ENCODE measurements at regions of chr6 and their contacts with region 1.

Region 1: GRCh38 chr6:593139-593906 is 63.6 kb downstream of the HUS1B start:
- DNase-seq: no peak
- H3K4me3 ChIP-seq: no peak overlapping the region
- H3K27ac ChIP-seq: 0 out of 2 replicates have a peak overlapping the region, but pooled peaks have one; percentile 25
- H3K4me1 ChIP-seq: peaks cover 0 to 6% (median 3%) of the 10 kb centered on the region in 4 experiments; a peak in 6 of 7 replicates
- H3K27me3 ChIP-seq: no peaks in the 10 kb centered on the region
- CTCF ChIP-seq: peak in 2 of 3 experiments; percentile 39 to 55; a peak in 3 of 4 replicates
- EP300 ChIP-seq: no peak
- POLR2A ChIP-seq: no peak
- RAD21 ChIP-seq: peak; percentile 76 to 78

Region 2: DNA sequence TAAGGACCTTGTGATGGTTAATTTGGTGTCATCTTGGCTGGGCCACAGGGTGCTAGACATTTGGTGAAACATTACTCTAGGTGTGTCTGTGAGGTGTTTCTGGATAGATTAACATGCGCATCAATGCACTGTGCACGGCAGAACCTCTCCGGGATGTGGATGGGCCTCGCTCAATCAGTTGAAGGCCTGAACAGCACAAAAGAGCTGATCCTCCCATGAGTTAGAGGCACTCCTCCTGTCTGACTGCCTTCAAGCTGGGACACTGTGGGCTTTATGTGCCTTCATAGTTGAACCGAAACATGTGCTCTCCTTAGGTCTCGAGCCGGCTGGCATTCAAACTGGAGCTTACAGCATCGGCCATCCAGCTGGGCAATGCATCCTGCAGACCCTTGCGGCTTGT is 25.2 kb before region 1 on chr6:
- CTCF ChIA-PET with region 1: interaction called, 13 read pairs
- POLR2A ChIA-PET with region 1: no interaction called
- DNase-seq: no peak
- H3K4me3 ChIP-seq: no peak overlapping the region
- H3K27ac ChIP-seq: no peak overlapping the region
- H3K4me1 ChIP-seq: no peaks in the 10 kb centered on the region
- H3K27me3 ChIP-seq: no peaks in the 10 kb centered on the region
- CTCF ChIP-seq: no peak
- EP300 ChIP-seq: no peak
- POLR2A ChIP-seq: no peak
- RAD21 ChIP-seq: no peak

Region 3: DNA sequence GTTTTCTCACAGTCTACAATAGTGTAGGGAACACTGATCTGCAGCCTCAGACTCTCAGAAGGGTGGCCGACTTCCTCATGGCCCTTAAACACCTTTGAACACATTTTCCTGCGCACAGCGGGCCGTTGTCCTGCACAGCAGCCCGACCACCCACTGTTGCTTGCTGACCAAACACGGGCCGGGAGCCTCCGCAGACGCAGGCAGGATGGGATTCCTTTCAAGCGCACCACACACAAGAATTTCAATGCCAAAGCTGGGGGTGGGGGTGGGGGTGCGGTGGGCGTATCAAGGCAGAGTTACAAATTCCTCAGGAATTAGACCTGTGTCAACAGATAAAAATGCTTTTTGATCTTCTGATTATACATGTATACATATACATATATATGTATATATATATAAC is 11.0 kb before region 1 on chr6:
- CTCF ChIA-PET with region 1: interaction called, 29 read pairs
- POLR2A ChIA-PET with region 1: interaction called, 3 read pairs
- DNase-seq: peak; percentile 63 to 66
- H3K4me3 ChIP-seq: peak overlapping the region in 2 of 4 experiments; percentile 22 to 47; a peak in 5 of 8 replicates
- H3K27ac ChIP-seq: 0 out of 2 replicates have a peak overlapping the region, but pooled peaks have one; percentile 47
- H3K4me1 ChIP-seq: peaks cover 4 to 16% (median 8%) of the 10 kb centered on the region in 4 experiments; a peak in 4 of 7 replicates
- H3K27me3 ChIP-seq: no peaks in the 10 kb centered on the region
- CTCF ChIP-seq: no peak
- EP300 ChIP-seq: no peak
- POLR2A ChIP-seq: no peak
- RAD21 ChIP-seq: no peak

Region 4: GRCh38 chr6:683742-684440 is 90.6 kb after region 1 on chr6:
- CTCF ChIA-PET with region 1: interaction called, 10 read pairs
- POLR2A ChIA-PET with region 1: no interaction called
- DNase-seq: peak; percentile 63 to 95
- H3K4me3 ChIP-seq: peak overlapping the region; percentile 4 to 50 (median 44); a peak in 5 of 8 replicates
- H3K27ac ChIP-seq: peak overlapping the region; percentile 43; the same call in 1 of the 2 replicates
- H3K4me1 ChIP-seq: peaks cover 10 to 40% (median 27%) of the 10 kb centered on the region in 4 experiments
- H3K27me3 ChIP-seq: no peaks in the 10 kb centered on the region
- CTCF ChIP-seq: no peak
- EP300 ChIP-seq: peak in 1 of 2 experiments; percentile 88; a peak in 1 of 3 replicates
- POLR2A ChIP-seq: no peak; a peak in 1 of 3 replicates
- RAD21 ChIP-seq: peak in 1 of 2 experiments; percentile 3; a peak in 1 of 4 replicates